GM12878 (cell line): ENCODE measurements at regions of chr2 and their contacts with region 1.

Region 1: GRCh38 chr2:46082521-46083485 is 214.4 kb upstream of the EPAS1 start:
- DNase-seq: no peak
- ATAC-seq: no peak
- H3K4me3 ChIP-seq: no peak overlapping the region
- H3K27ac ChIP-seq: no peak overlapping the region
- H3K4me1 ChIP-seq: 0 out of 2 replicates have a peak, but pooled peaks cover 3% of the 10 kb centered on the region
- H3K27me3 ChIP-seq: no peaks in the 10 kb centered on the region
- CTCF ChIP-seq: no peak
- EP300 ChIP-seq: no peak
- POLR2A ChIP-seq: no peak
- RAD21 ChIP-seq: no peak

Region 2: DNA sequence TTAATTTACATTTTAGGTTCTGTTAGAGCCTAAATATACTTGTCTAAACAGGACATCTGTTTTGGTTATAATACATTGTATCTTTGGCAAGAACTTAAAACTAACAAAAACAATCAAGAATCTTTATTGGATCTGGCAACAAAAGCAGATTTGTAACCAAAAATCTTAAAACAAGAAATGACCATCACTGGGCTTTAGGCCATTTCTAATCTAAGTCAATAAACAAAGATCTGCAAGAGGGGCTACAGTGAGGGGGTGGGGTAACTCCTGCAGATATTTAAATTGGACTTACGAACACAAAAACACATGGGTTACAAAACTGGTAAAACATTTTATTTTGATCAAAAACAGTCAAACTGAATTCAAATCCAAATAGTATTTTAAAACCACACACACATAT is 549.0 kb before region 1 on chr2:
- CTCF ChIA-PET with region 1: no interaction called
- POLR2A ChIA-PET with region 1: no interaction called
- RAD21 ChIA-PET with region 1: no interaction called
- SMC1A ChIA-PET with region 1: no interaction called
- in situ Hi-C with region 1: no loop called
- intact Hi-C with region 1: no loop called
- DNase-seq: no peak
- ATAC-seq: no peak
- H3K4me3 ChIP-seq: no peak overlapping the region
- H3K27ac ChIP-seq: no peak overlapping the region
- H3K4me1 ChIP-seq: no peaks in the 10 kb centered on the region
- H3K27me3 ChIP-seq: no peaks in the 10 kb centered on the region
- CTCF ChIP-seq: no peak
- EP300 ChIP-seq: no peak
- POLR2A ChIP-seq: no peak
- RAD21 ChIP-seq: no peak

Region 3: DNA sequence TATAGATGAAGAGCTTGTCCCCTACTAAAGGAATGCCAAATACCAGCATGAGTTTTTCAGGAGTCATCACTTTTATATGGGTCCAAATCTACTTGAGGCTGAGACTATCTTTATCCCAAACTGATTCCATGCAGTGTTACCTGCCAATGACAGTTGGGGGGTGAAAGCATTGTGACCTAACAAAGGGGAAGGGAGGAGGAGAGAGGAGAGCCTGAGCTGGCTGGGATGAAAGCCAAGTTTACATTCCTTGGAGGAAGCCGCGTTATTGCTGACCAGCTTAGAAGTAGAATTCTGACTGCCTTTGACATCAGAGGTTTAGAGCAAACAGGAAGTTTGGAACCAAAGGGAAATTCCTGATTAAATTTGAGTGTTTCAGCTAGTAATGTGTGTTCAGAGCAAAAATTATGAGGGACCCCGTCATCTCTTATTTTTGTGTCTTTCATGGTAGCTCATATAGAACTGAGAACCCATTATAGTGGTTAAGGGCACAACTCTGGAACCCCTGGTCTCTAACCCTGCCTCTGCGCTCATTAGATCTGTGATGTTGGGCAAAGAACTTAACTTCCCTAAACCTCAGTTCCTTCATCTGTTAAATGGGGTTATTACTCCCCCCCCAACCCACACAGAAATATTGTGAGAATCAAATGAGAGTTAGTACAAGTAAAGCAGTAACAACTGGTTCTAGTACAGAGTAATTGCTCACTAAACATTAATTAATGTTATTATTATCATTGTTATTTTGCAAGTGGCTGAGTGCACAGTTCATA is 15.1 kb after region 1 on chr2:
- CTCF ChIA-PET with region 1: interaction called, 12 read pairs
- POLR2A ChIA-PET with region 1: interaction called, 5 read pairs
- RAD21 ChIA-PET with region 1: interaction called, 19 read pairs
- SMC1A ChIA-PET with region 1: interaction called, 35 read pairs
- in situ Hi-C with region 1: no loop called
- intact Hi-C with region 1: no loop called
- DNase-seq: no peak
- ATAC-seq: peak; percentile 65
- H3K4me3 ChIP-seq: no peak overlapping the region
- H3K27ac ChIP-seq: no peak overlapping the region
- H3K4me1 ChIP-seq: no peaks in the 10 kb centered on the region
- H3K27me3 ChIP-seq: no peaks in the 10 kb centered on the region
- CTCF ChIP-seq: no peak
- EP300 ChIP-seq: no peak
- POLR2A ChIP-seq: no peak
- RAD21 ChIP-seq: no peak

Region 4: GRCh38 chr2:46246790-46247189 is 164.0 kb after region 1 on chr2:
- CTCF ChIA-PET with region 1: interaction called, 6 read pairs
- POLR2A ChIA-PET with region 1: interaction called, 4 read pairs
- RAD21 ChIA-PET with region 1: interaction called, 20 read pairs
- SMC1A ChIA-PET with region 1: interaction called, 17 read pairs
- in situ Hi-C with region 1: no loop called
- intact Hi-C with region 1: no loop called
- DNase-seq: peak; percentile 68
- ATAC-seq: peak; percentile 98
- H3K4me3 ChIP-seq: no peak overlapping the region
- H3K27ac ChIP-seq: no peak overlapping the region
- H3K4me1 ChIP-seq: no peaks in the 10 kb centered on the region
- H3K27me3 ChIP-seq: no peaks in the 10 kb centered on the region
- CTCF ChIP-seq: no peak
- EP300 ChIP-seq: peak; percentile 42 to 66; a peak in 2 of 4 replicates
- POLR2A ChIP-seq: no peak
- RAD21 ChIP-seq: no peak